Activated T-helper 1 cell treated with anti-CD3 and anti-CD28 coated beads, Interleukin-12 subunit alpha, Interleukin-12 subunit beta, Interleukin-2, Interleukin-4 antibody, amounts not matched to agents 30 ng/mL and 10 ng/mL and 1 ng/mL, durations not matched to agents 14 hours and 24 hours and 36 hours (primary cell): ENCODE measurements at regions of chr7 and their contacts with region 1.

Region 1: GRCh38 chr7:10889266-10889898 is 84.3 kb upstream of the PHF14 start:
- DNase-seq: no peak
- H3K4me3 Mint-ChIP-seq: no peak overlapping the region
- H3K27ac Mint-ChIP-seq: no peak overlapping the region
- H3K4me1 Mint-ChIP-seq: peaks cover 11% of the 10 kb centered on the region
- H3K27me3 Mint-ChIP-seq: no peaks in the 10 kb centered on the region

Region 2: GRCh38 chr7:10412422-10413019 is 476.9 kb before region 1 on chr7:
- intact Hi-C with region 1: loop called (anchors 5 kb)
- DNase-seq: no peak
- H3K4me3 Mint-ChIP-seq: no peak overlapping the region
- H3K27ac Mint-ChIP-seq: no peak overlapping the region
- H3K4me1 Mint-ChIP-seq: no peaks in the 10 kb centered on the region
- H3K27me3 Mint-ChIP-seq: no peaks in the 10 kb centered on the region

Region 3: DNA sequence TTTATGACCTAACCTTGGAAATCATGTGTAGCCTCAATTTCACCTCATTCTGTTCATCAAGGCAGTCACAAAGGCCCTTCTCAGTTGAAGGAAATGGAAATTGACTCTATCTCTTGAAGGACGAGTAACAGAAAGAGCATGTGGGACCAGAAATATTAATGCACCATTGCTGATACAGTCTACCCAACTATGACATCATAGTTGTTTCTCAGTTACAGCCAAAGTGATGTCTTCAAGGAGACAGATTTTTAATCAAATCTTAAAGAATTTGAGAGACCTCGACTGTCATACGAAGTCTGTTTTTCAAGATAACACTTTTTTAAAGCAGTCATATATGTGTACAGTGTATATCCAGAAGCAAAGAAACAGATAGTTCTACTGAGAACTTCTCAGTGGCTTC is 251.4 kb before region 1 on chr7:
- intact Hi-C with region 1: loop called (anchors 1 kb)
- DNase-seq: no peak
- H3K4me3 Mint-ChIP-seq: no peak overlapping the region
- H3K27ac Mint-ChIP-seq: no peak overlapping the region
- H3K4me1 Mint-ChIP-seq: peaks cover 7% of the 10 kb centered on the region
- H3K27me3 Mint-ChIP-seq: peaks cover 2% of the 10 kb centered on the region

Region 4: GRCh38 chr7:11343818-11344413 is 454.5 kb after region 1 on chr7:
- intact Hi-C with region 1: loop called (anchors 2 kb)
- DNase-seq: no peak
- H3K4me3 Mint-ChIP-seq: no peak overlapping the region
- H3K27ac Mint-ChIP-seq: no peak overlapping the region
- H3K4me1 Mint-ChIP-seq: no peaks in the 10 kb centered on the region
- H3K27me3 Mint-ChIP-seq: peaks cover 2% of the 10 kb centered on the region

Region 5: DNA sequence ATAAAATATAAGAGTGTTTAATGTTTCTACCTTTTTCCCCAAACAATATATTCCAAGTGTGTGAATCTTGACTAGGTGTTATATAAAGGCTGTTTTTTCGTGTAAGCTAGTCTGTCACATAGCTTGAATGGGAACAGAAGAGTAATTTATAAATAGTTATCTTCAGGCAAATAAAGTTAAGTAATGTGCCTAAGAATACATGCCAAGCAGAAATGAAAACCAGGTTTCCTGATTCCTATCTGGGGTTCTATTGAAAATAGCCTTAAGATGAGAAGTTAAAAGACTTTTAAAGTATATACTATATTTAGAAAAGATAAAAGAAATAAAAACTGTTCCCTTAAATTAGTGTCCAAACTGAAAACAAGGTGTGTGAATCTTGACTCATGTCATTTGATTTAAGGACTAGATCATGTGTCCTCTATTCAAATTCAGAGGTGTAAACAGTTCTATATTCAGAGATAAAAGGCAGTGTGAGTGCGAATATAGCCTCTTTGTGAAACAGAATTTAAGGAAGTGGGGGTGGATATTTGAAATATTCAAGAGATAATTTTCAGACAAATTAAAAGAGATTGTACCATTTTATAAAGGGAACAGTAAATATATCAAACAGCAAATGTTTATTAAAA is 695.1 kb after region 1 on chr7:
- intact Hi-C with region 1: loop called (anchors 5 kb)
- DNase-seq: no peak
- H3K4me3 Mint-ChIP-seq: no peak overlapping the region
- H3K27ac Mint-ChIP-seq: no peak overlapping the region
- H3K4me1 Mint-ChIP-seq: no peaks in the 10 kb centered on the region
- H3K27me3 Mint-ChIP-seq: no peaks in the 10 kb centered on the region